ENCODE measurements at regions of chr19 and their contacts with region 1.

Region 1: GRCh38 chr19:45092747-45093678 is at the start of gene PPP1R37:
- DNase-seq: peak; percentile 92 to 96 (median 95)
- H3K4me3 ChIP-seq: peak within 1 kb of the TSS; percentile 90 to 94
- H3K4me3 Mint-ChIP-seq: peak within 1 kb of the TSS; percentile 91 to 98 (median 92)
- H3K27ac ChIP-seq: peak within 1 kb of the TSS; percentile 80
- H3K27ac Mint-ChIP-seq: peak within 1 kb of the TSS; percentile 94 to 99 (median 97)
- H3K4me1 ChIP-seq: peaks cover 68% of the 10 kb centered on the region
- H3K4me1 Mint-ChIP-seq: peaks cover 42 to 72% (median 57%) of the 10 kb centered on the region in 4 donors
- H3K27me3 ChIP-seq: no peaks in the 10 kb centered on the region
- H3K27me3 Mint-ChIP-seq: no peaks in the 10 kb centered on the region
- total RNA-seq, gene PPP1R37: 25.2 to 26.2 TPM

Region 2: DNA sequence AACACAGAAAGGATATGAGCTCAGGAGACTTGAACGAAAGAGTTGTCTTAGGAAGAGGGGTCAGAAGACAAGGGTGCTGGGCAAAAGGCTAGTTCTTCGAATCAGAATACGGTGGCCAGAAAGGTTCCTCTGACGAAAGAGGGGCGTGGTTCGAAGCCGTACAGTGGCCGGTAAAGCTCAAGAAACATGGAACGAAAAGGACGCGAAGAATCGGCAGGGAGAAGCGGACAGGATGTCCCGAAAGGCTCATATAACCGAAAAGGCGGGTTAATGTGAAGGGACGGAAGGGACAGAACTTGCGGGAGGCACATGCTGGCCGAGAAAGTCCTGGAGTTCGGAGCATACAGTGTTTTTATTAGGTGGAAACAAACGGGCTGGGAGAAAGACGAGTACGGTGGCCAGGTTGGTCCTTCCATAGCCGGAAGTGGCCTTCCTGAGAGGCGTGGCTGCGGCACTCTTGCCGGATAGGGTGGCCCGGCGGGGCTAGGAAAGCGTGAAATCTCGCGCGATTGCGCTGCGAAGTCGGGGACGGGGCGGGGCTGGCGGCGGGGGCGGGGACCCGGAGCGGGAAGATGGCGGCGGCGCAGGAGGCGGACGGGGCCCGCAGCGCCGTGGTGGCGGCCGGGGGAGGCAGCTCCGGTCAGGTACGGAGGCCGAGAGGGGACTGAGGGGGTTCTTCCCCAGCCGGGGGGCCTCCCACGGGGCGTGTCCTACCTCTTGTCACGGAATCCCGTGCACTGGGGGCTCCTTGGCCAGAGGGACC is 138.0 kb before region 1 on chr19 and contains the start of gene CLPTM1:
- CTCF ChIA-PET with region 1: interaction called, 6 read pairs
- POLR2A ChIA-PET with region 1: interaction called, 12 read pairs
- intact Hi-C with region 1: loop called (anchors 1 kb)
- DNase-seq: peak; percentile 96
- H3K4me3 ChIP-seq: peak within 1 kb of the TSS; percentile 87 to 96
- H3K4me3 Mint-ChIP-seq: peak within 1 kb of the TSS; percentile 92 to 99 (median 98)
- H3K27ac ChIP-seq: peak within 1 kb of the TSS; percentile 91
- H3K27ac Mint-ChIP-seq: peak within 1 kb of the TSS; percentile 96 to 99 (median 98)
- H3K4me1 ChIP-seq: peaks cover 43% of the 10 kb centered on the region
- H3K4me1 Mint-ChIP-seq: peaks cover 32 to 55% (median 46%) of the 10 kb centered on the region in 4 donors
- H3K27me3 ChIP-seq: no peaks in the 10 kb centered on the region
- H3K27me3 Mint-ChIP-seq: no peaks in the 10 kb centered on the region
- total RNA-seq, gene CLPTM1: 85.1 to 86.4 TPM

Region 3: DNA sequence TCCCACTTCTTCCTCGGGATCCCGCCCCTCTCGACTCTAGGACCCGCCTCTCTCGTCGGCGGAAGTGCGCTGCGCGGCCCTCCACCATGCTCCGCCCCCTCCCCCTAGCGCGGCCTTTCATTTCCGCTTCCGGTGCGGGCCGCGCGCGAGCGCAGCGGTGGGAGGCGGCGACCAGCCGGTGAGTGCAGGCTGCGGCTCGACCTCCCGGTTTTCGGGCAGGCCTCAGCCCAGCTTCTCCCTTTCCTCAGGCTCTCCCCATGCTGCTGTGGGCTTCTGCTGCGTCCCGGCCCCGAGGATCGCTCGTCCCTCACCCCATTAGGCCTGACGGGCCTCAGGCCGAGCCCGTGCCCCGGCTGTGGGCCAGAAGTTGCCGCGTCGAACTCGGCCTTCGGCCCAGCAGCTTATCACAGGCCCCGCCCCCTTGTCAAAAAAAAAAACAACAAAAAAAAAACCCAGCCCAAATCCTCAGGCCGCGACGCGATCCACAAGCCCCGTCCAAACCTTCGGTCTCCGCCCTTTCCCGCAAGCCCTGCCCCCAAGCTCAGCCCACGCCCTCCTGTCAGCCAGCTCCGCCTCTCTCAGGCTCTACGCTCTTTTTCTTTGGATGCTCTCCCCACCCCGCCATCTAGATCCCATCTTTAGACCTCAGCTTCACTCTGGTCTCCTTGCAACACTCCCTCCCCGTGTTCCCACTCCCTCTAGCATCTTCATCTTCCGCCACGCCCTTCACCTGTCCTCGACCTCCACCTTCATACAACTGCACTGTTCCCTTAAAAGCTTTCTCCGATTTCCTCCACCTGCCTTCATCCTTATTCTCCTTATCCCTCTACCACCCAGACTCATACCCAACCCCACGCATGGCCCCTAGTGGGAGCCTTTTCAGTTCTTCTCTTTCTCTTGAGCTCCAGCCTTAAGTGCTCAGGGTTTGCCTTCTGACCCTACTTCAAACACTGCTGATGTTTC is 53.8 kb before region 1 on chr19 and contains the start of gene CLASRP:
- CTCF ChIA-PET with region 1: no interaction called
- POLR2A ChIA-PET with region 1: interaction called, 23 read pairs
- intact Hi-C with region 1: loop called (anchors 1 kb)
- DNase-seq: peak; percentile 85 to 88 (median 86)
- H3K4me3 ChIP-seq: peak within 1 kb of the TSS; percentile 45 to 62
- H3K4me3 Mint-ChIP-seq: peak within 1 kb of the TSS; percentile 95 to 99 (median 98)
- H3K27ac ChIP-seq: peak within 1 kb of the TSS; percentile 98
- H3K27ac Mint-ChIP-seq: peak within 1 kb of the TSS; percentile 88 to 99 (median 98)
- H3K4me1 ChIP-seq: peaks cover 34% of the 10 kb centered on the region
- H3K4me1 Mint-ChIP-seq: peaks cover 21 to 46% (median 29%) of the 10 kb centered on the region in 4 donors
- H3K27me3 ChIP-seq: no peaks in the 10 kb centered on the region
- H3K27me3 Mint-ChIP-seq: no peaks in the 10 kb centered on the region
- total RNA-seq, gene CLASRP: 156 to 163 TPM

Region 4: DNA sequence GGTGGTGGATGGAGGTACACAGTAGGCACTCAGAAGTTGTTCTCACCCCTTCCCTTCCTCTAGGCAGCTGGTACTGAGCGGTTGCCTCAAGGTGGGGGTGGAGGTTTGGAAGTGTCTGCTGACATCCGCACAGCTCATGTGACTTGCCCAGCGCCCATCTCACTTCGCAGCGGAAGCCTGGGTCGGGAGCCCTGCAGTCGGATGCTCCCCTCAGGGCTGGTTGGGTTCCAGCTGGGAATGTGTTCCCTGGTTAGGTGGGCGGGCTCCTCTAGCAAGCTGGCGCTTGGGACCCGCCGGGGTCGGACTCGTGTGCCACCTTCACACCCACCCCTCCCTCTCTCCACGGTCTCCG is 10.1 kb after region 1 on chr19:
- CTCF ChIA-PET with region 1: interaction called, 5 read pairs
- POLR2A ChIA-PET with region 1: interaction called, 30 read pairs
- intact Hi-C with region 1: no loop called
- DNase-seq: peak; percentile 41 to 52 (median 51)
- H3K4me3 ChIP-seq: peak overlapping the region in 1 of 2 donors; percentile 11
- H3K4me3 Mint-ChIP-seq: peak overlapping the region; percentile 35 to 78 (median 72)
- H3K27ac ChIP-seq: no peak overlapping the region
- H3K27ac Mint-ChIP-seq: peak overlapping the region in 6 of 7 donors; percentile 52 to 92 (median 80)
- H3K4me1 ChIP-seq: peaks cover 34% of the 10 kb centered on the region
- H3K4me1 Mint-ChIP-seq: peaks cover 36 to 81% (median 50%) of the 10 kb centered on the region in 4 donors
- H3K27me3 ChIP-seq: no peaks in the 10 kb centered on the region
- H3K27me3 Mint-ChIP-seq: no peaks in the 10 kb centered on the region

Region 5: GRCh38 chr19:45171211-45171623 is 78.2 kb after region 1 on chr19:
- CTCF ChIA-PET with region 1: interaction called, 3 read pairs
- POLR2A ChIA-PET with region 1: interaction called, 12 read pairs
- intact Hi-C with region 1: no loop called
- DNase-seq: peak; percentile 49 to 77 (median 54)
- H3K4me3 ChIP-seq: peak overlapping the region; percentile 17 to 43
- H3K4me3 Mint-ChIP-seq: peak overlapping the region; percentile 66 to 90 (median 84)
- H3K27ac ChIP-seq: peak overlapping the region; percentile 61
- H3K27ac Mint-ChIP-seq: peak overlapping the region; percentile 88 to 99 (median 94)
- H3K4me1 ChIP-seq: peaks cover 60% of the 10 kb centered on the region
- H3K4me1 Mint-ChIP-seq: peaks cover 27 to 65% (median 42%) of the 10 kb centered on the region in 4 donors
- H3K27me3 ChIP-seq: no peaks in the 10 kb centered on the region
- H3K27me3 Mint-ChIP-seq: no peaks in the 10 kb centered on the region

Region 6: DNA sequence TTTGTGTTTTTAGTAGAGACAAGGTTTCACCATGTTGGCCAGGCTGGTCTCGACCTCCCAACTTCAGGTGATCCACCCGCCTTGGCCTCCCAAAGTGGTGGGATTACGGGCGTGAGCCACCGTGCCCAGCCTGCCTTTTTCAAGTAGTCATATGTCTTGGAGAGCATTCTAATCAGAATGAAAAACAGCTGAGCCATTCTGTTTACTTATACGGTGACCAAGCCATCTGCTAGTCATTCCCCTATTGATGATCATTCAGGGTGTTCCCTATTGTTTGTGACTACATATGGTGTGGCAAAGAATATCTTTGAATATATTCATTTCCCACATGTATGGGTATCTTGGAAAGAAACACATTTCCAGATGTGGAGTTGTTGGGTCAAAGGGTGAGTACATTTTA is 102.8 kb after region 1 on chr19:
- CTCF ChIA-PET with region 1: no interaction called
- POLR2A ChIA-PET with region 1: no interaction called
- intact Hi-C with region 1: no loop called
- DNase-seq: no peak
- H3K4me3 ChIP-seq: no peak overlapping the region
- H3K4me3 Mint-ChIP-seq: no peak overlapping the region
- H3K27ac ChIP-seq: no peak overlapping the region
- H3K27ac Mint-ChIP-seq: no peak overlapping the region
- H3K4me1 ChIP-seq: no peaks in the 10 kb centered on the region
- H3K4me1 Mint-ChIP-seq: no peaks in the 10 kb centered on the region
- H3K27me3 ChIP-seq: no peaks in the 10 kb centered on the region
- H3K27me3 Mint-ChIP-seq: peaks cover 0 to 1% of the 10 kb centered on the region in 2 donors

Measured in CD4-positive, alpha-beta memory T cell (primary cell).